Naive thymus-derived CD4-positive, alpha-beta T cell (primary cell): ENCODE measurements at regions of chr10 and their contacts with region 1.

Region 1: GRCh38 chr10:109883859-109884771 is 39.2 kb downstream of the XPNPEP1 start:
- DNase-seq: peak; percentile 33 to 66 (median 51)
- ATAC-seq: peak; percentile 88
- H3K4me3 ChIP-seq: no peak overlapping the region
- H3K4me3 Mint-ChIP-seq: no peak overlapping the region
- H3K27ac ChIP-seq: no peak overlapping the region
- H3K27ac Mint-ChIP-seq: peak overlapping the region in 3 of 9 donors; percentile 9 to 25 (median 22)
- H3K4me1 ChIP-seq: no peaks in the 10 kb centered on the region
- H3K4me1 Mint-ChIP-seq: peaks cover 5 to 19% (median 9%) of the 10 kb centered on the region in 7 donors
- H3K27me3 ChIP-seq: no peaks in the 10 kb centered on the region
- H3K27me3 Mint-ChIP-seq: no peaks in the 10 kb centered on the region

Region 2: DNA sequence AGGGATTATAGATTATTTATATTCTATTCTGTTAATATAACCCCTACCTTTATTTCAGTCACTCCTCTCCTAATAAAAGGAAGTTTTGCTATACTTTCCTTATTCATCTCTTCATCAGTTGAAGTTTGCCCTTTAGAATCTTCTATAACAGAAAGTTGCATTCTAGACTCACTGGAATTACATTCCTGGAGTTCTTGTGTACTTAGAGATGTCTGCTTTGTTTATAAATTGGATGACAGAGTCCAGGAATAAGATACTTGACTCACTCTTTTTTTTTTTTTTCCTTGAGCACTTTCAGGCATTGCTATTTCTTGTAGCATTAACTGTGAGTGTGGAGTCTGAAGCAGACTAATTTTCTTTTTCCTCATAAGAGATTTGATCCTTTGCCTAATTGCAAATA is 601.6 kb before region 1 on chr10:
- CTCF ChIA-PET with region 1: no interaction called
- POLR2A ChIA-PET with region 1: no interaction called
- intact Hi-C with region 1: no loop called
- DNase-seq: no peak
- ATAC-seq: no peak
- H3K4me3 ChIP-seq: no peak overlapping the region
- H3K4me3 Mint-ChIP-seq: no peak overlapping the region
- H3K27ac ChIP-seq: no peak overlapping the region
- H3K27ac Mint-ChIP-seq: no peak overlapping the region
- H3K4me1 ChIP-seq: no peaks in the 10 kb centered on the region
- H3K4me1 Mint-ChIP-seq: no peaks in the 10 kb centered on the region
- H3K27me3 ChIP-seq: no peaks in the 10 kb centered on the region
- H3K27me3 Mint-ChIP-seq: no peaks in the 10 kb centered on the region

Region 3: GRCh38 chr10:109358325-109358724 is 525.8 kb before region 1 on chr10:
- CTCF ChIA-PET with region 1: no interaction called
- POLR2A ChIA-PET with region 1: no interaction called
- intact Hi-C with region 1: no loop called
- DNase-seq: no peak
- ATAC-seq: no peak
- H3K4me3 ChIP-seq: no peak overlapping the region
- H3K4me3 Mint-ChIP-seq: no peak overlapping the region
- H3K27ac ChIP-seq: no peak overlapping the region
- H3K27ac Mint-ChIP-seq: no peak overlapping the region
- H3K4me1 ChIP-seq: no peaks in the 10 kb centered on the region
- H3K4me1 Mint-ChIP-seq: no peaks in the 10 kb centered on the region
- H3K27me3 ChIP-seq: no peaks in the 10 kb centered on the region
- H3K27me3 Mint-ChIP-seq: peaks cover 0 to 6% (median 0%) of the 10 kb centered on the region in 5 donors

Region 4: DNA sequence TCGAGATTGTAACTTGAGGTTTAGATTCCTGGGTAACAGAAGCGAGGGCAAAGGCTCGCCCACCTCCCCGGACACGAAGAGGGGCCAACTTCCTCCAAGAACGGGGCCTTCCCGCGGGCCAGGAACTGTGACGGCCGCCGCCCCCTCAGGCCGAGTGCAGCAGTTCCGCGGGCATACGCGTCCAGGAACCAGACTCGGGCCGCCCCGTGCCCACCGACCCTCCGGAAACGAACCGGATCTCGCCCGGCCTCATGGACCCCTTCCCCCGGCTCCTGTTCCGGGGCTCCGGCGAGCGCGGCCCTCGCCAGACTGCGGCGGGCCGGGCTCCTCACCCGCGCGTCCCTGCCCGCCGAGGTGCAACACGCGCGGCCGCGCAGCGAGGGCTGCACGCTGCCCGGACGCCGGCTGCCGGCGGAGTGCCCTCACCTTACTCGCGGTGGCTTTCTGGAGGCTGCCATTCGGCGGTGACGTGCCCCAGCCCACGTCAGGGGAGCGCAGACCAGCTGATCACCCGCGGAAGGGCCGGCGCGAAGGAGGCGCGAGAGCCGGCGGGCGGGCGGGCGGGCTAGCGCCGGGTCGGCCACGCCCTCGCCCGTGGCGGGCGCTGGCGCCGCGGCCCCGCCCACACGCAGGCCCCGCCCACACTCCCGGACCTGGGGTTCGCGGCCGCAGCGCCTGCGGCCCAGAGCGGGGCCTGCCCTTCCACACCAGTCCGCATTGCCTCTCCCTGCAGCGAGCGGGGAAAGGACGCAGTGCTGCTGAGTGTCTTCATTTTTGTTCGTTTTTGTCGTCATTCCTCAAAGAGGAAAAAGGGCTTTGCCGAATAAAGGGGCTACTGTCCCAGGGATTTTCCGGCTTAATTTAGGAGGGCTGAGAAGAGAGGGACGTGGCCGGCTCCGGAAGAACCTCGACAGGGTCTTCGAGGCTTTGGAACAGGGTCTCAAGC is 39.1 kb after region 1 on chr10 and contains the start of gene XPNPEP1:
- CTCF ChIA-PET with region 1: no interaction called
- POLR2A ChIA-PET with region 1: no interaction called
- intact Hi-C with region 1: loop called (anchors 2 kb)
- DNase-seq: peak; percentile 55 to 90 (median 66)
- ATAC-seq: peak; percentile 98
- H3K4me3 ChIP-seq: peak within 1 kb of the TSS; percentile 67
- H3K4me3 Mint-ChIP-seq: peak within 1 kb of the TSS; percentile 78 to 94 (median 90)
- H3K27ac ChIP-seq: peak within 1 kb of the TSS; percentile 83
- H3K27ac Mint-ChIP-seq: peak within 1 kb of the TSS; percentile 75 to 95 (median 89)
- H3K4me1 ChIP-seq: peaks cover 30 to 39% of the 10 kb centered on the region in 2 donors
- H3K4me1 Mint-ChIP-seq: peaks cover 36 to 58% (median 54%) of the 10 kb centered on the region in 7 donors
- H3K27me3 ChIP-seq: no peaks in the 10 kb centered on the region
- H3K27me3 Mint-ChIP-seq: peaks cover 0 to 16% (median 0%) of the 10 kb centered on the region in 5 donors
- total RNA-seq, gene XPNPEP1: 44.1 to 100 (median 60.7) TPM

Region 5: DNA sequence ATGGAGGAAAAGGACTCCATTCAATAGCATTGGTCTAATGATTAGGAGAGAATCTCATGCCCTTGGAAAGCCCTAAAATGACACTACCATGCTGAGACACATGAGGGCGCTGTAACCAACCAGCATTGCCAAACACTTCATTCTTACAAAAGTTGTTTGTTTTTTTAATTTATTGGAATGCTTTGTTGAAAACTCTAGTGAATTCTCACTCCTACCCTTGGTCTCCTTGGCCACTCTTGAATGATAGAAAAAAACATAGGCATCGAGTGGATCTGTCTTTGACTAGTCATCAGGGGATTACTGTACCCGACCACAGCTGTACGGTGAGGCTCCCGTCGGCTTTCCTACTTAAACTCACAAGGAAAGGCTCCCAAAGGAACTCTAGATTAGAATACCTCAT is 94.4 kb after region 1 on chr10:
- CTCF ChIA-PET with region 1: interaction called, 10 read pairs
- POLR2A ChIA-PET with region 1: no interaction called
- intact Hi-C with region 1: loop called (anchors 1 kb)
- DNase-seq: peak; percentile 30 to 68 (median 51)
- ATAC-seq: peak; percentile 87
- H3K4me3 ChIP-seq: no peak overlapping the region
- H3K4me3 Mint-ChIP-seq: no peak overlapping the region
- H3K27ac ChIP-seq: no peak overlapping the region
- H3K27ac Mint-ChIP-seq: peak overlapping the region in 3 of 9 donors; percentile 25 to 44 (median 41)
- H3K4me1 ChIP-seq: no peaks in the 10 kb centered on the region
- H3K4me1 Mint-ChIP-seq: peaks cover 5 to 38% (median 19%) of the 10 kb centered on the region in 7 donors
- H3K27me3 ChIP-seq: no peaks in the 10 kb centered on the region
- H3K27me3 Mint-ChIP-seq: peaks cover 0 to 12% (median 0%) of the 10 kb centered on the region in 5 donors

Region 6: GRCh38 chr10:110137142-110137545 is 253.0 kb after region 1 on chr10:
- CTCF ChIA-PET with region 1: interaction called, 9 read pairs
- POLR2A ChIA-PET with region 1: no interaction called
- intact Hi-C with region 1: loop called (anchors 1 kb)
- DNase-seq: peak in 7 of 9 donors; percentile 48 to 67 (median 64)
- ATAC-seq: peak; percentile 85
- H3K4me3 ChIP-seq: no peak overlapping the region
- H3K4me3 Mint-ChIP-seq: peak overlapping the region in 1 of 10 donors; percentile 19
- H3K27ac ChIP-seq: peak overlapping the region; percentile 4
- H3K27ac Mint-ChIP-seq: peak overlapping the region; percentile 2 to 83 (median 45)
- H3K4me1 ChIP-seq: peaks cover 14% of the 10 kb centered on the region in 2 donors
- H3K4me1 Mint-ChIP-seq: peaks cover 13 to 38% (median 29%) of the 10 kb centered on the region in 7 donors
- H3K27me3 ChIP-seq: no peaks in the 10 kb centered on the region
- H3K27me3 Mint-ChIP-seq: no peaks in the 10 kb centered on the region

Region 7: DNA sequence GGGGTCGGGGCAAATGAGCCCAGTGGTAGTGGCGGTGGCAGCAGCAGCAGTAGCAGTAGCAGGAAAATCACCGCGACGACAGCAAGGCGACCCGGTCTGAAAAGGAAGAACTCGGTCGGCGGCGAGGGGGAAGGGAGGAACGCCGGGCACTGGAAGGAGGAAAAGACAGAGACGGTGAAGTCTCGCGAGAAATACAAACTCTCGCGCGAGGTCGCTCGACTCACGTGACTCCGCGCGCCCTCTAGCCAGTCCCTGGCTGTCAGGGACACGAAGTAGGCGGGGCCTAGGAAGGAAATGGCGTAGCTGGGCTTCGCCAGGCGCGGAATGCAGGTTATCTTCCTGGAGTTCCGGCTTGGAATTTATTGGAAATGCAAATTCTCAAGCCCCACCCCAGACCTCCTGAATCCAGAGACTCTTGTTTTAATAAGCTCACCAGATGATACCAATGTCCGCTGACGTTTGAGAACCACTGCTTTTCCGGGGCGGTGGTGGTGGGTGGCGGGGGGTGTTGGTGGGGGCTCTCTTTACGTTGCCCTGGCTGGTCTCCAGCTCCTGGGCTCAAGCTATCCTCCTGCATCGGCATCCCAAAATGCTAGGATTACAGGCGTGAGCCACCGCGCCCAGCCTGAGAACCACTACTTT is 420.8 kb after region 1 on chr10 and contains the start of gene SMNDC1:
- CTCF ChIA-PET with region 1: no interaction called
- POLR2A ChIA-PET with region 1: no interaction called
- intact Hi-C with region 1: loop called in 1 of 2 experiments (anchors 10 kb)
- DNase-seq: peak; percentile 93 to 97 (median 96)
- ATAC-seq: peak; percentile 94
- H3K4me3 ChIP-seq: peak within 1 kb of the TSS; percentile 91
- H3K4me3 Mint-ChIP-seq: peak within 1 kb of the TSS; percentile 94 to 99 (median 98)
- H3K27ac ChIP-seq: peak within 1 kb of the TSS; percentile 89
- H3K27ac Mint-ChIP-seq: peak within 1 kb of the TSS; percentile 97 to 100 (median 100)
- H3K4me1 ChIP-seq: peaks cover 32 to 38% of the 10 kb centered on the region in 2 donors
- H3K4me1 Mint-ChIP-seq: peaks cover 26 to 61% (median 55%) of the 10 kb centered on the region in 7 donors
- H3K27me3 ChIP-seq: no peaks in the 10 kb centered on the region
- H3K27me3 Mint-ChIP-seq: no peaks in the 10 kb centered on the region
- total RNA-seq, gene SMNDC1: 34.4 to 43.1 (median 40.1) TPM